Activated naive CD4-positive, alpha-beta T cell treated with anti-CD3 and anti-CD28 coated beads for 36 hours (primary cell): ENCODE measurements at regions of chr19 and their contacts with region 1.

Region 1: GRCh38 chr19:46840136-46840942 is 10.3 kb downstream of the AP2S1 start:
- DNase-seq: peak; percentile 61
- H3K4me3 Mint-ChIP-seq: no peak overlapping the region
- H3K27ac Mint-ChIP-seq: no peak overlapping the region
- H3K4me1 Mint-ChIP-seq: no peaks in the 10 kb centered on the region
- H3K27me3 Mint-ChIP-seq: no peaks in the 10 kb centered on the region

Region 2: DNA sequence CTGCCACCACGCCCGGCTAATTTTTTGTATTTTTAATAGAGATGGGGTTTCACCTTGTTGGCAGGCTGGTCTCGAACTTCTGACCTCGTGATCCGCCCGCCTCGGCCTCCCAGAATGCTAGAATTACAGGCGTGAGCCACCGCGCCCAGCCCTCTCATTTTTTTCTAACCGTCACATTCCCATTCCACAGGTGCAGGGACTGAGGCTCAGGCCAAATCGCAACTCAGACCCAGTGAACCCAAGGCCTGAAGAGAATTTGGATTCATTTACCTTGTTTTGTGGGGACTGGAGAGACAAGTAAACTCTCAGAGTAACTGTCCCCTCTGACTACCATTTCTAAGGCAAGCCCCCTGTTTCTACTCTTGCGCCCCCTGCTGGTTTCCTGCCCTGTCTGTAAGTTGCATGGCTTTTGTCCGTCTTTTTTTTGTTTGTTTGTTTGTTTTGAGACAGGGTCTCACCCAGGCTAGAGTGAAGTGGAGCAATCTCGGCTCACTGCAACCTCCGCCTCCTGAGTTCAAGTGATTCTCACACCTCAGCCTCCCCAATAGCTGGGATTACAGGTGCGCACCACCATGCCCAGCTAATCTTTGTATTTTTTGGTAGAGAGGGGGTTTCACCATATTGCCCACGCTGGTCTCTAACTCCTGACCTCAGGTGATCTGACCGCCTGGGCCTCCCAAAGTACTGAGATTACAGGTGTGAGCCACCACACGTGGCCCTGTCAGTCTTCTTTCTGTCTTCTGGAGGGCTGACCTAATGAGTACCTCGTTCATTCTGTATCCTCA is 91.8 kb before region 1 on chr19:
- CTCF ChIA-PET with region 1: interaction called, 30 read pairs
- intact Hi-C with region 1: no loop called
- DNase-seq: peak; percentile 86
- H3K4me3 Mint-ChIP-seq: no peak overlapping the region
- H3K27ac Mint-ChIP-seq: no peak overlapping the region
- H3K4me1 Mint-ChIP-seq: peaks cover 33% of the 10 kb centered on the region
- H3K27me3 Mint-ChIP-seq: no peaks in the 10 kb centered on the region

Region 3: GRCh38 chr19:46753420-46754155 is 86.8 kb before region 1 on chr19:
- CTCF ChIA-PET with region 1: interaction called, 60 read pairs
- intact Hi-C with region 1: loop called (anchors 1 kb)
- DNase-seq: peak; percentile 88
- H3K4me3 Mint-ChIP-seq: no peak overlapping the region
- H3K27ac Mint-ChIP-seq: no peak overlapping the region
- H3K4me1 Mint-ChIP-seq: peaks cover 5% of the 10 kb centered on the region
- H3K27me3 Mint-ChIP-seq: no peaks in the 10 kb centered on the region

Region 4: DNA sequence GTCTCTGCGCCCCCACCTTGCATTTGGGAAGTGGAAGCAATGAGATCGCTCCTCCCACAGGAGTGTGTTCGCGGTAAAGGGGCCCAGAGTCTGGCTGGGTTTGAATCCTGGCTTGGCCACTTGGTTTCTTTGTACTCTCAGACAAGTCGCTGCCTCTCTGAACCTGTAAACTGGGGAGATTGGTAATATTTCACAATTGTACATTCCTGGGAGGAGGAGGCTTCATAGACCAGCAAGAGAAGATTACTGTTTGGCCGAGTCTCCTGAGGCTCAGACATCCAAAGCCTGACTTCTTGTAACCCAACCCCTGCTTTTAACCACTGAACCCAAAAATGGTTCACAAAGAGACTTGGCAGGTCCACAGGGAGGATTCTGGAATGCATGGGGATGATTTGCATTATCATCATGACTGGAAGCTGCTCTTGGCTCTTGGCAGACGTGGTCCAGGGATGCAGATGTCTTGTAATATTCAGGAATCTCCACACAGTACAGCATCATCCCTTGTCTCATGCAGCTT is 80.5 kb before region 1 on chr19:
- CTCF ChIA-PET with region 1: interaction called, 60 read pairs
- intact Hi-C with region 1: loop called (anchors 1 kb)
- DNase-seq: no peak
- H3K4me3 Mint-ChIP-seq: no peak overlapping the region
- H3K27ac Mint-ChIP-seq: no peak overlapping the region
- H3K4me1 Mint-ChIP-seq: no peaks in the 10 kb centered on the region
- H3K27me3 Mint-ChIP-seq: no peaks in the 10 kb centered on the region

Region 5: DNA sequence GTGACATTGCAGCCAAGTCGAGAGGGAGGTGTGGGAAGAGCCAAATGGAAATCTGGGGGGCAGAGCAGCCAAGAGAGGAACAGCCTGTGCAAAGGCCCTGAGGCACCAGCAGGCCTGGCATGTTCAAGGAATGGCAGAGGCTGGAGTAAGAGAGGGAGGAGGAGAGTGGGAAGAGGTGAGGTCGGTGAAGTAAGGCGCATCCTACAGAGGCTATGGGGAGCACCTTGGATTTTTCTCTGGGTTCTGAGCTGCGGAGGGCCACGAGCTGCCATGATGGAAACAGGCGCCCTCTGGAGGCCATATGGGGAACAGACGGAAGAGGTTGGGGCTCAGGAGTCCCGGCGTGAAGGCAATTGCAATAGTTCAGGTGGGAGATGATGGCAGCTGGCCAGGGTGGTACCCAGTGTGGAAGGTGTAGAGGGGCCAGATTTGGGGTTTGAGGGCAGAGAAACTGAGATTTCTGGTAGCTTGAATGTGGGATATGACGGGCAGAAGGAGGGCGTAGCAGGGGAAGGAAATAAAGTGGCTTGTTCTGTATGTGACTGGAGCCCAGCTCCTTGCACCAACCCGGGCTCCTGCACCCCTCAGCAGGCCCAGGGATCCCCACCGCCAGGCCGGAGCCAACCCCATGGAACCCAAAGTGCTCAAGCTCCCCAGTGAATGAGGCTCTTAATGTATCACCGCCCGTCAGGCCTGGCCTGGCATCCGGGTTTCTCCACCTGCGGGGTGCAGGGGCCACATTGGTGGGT is 73.6 kb before region 1 on chr19:
- CTCF ChIA-PET with region 1: interaction called, 18 read pairs
- intact Hi-C with region 1: no loop called
- DNase-seq: peak; percentile 74
- H3K4me3 Mint-ChIP-seq: no peak overlapping the region
- H3K27ac Mint-ChIP-seq: no peak overlapping the region
- H3K4me1 Mint-ChIP-seq: peaks cover 2% of the 10 kb centered on the region
- H3K27me3 Mint-ChIP-seq: no peaks in the 10 kb centered on the region

Region 6: DNA sequence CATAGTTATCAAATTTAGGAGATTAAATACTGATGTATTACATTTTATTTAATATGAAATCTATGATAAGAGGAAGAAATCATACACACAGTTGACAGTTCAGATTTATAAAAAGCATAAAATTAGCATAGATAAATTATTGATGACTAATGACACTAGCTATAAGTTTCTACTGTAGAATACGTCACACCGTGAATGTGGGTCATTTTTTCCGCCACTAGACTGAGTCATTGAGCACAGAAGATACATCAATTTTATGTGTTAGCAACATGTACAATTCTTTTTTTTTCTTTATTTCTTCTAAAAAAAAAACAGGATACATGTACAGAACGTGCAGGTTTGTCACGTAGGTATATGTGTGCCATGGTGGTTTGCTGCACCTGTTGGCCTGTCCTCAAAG is 11.9 kb before region 1 on chr19:
- CTCF ChIA-PET with region 1: interaction called, 21 read pairs
- intact Hi-C with region 1: no loop called
- DNase-seq: peak; percentile 78
- H3K4me3 Mint-ChIP-seq: no peak overlapping the region
- H3K27ac Mint-ChIP-seq: no peak overlapping the region
- H3K4me1 Mint-ChIP-seq: peaks cover 10% of the 10 kb centered on the region
- H3K27me3 Mint-ChIP-seq: no peaks in the 10 kb centered on the region